Psoas muscle (tissue), 8 donors: ENCODE measurements at regions of chr9 and their contacts with region 1.

Region 1: GRCh38 chr9:4382722-4383317 is 83.0 kb upstream of the GLIS3 start:
- DNase-seq: no peak
- ATAC-seq: peak in 1 of 4 donors; percentile 53
- H3K4me3 ChIP-seq: no peak overlapping the region
- H3K27ac ChIP-seq: no peak overlapping the region
- H3K4me1 ChIP-seq: no peaks in the 10 kb centered on the region
- H3K27me3 ChIP-seq: no peaks in the 10 kb centered on the region
- CTCF ChIP-seq: peak; percentile 57

Region 2: DNA sequence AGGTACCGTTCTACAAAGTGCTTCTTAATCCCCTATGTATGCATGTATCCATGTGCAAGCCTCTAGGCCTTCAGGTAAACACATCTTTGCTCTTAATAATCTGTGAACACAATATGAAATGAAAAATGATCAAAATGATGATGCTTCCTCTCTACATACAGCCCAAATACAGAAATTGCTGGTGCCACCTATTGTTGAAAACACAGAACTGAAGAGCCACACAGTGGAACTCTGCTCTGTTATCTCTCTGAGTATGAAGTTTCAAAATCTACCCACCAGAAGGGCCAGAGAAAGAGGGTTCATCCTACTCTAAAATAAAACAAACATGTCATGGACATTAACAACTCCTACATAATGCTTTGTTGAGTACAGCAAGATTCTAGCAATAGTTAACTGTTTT is 154.2 kb before region 1 on chr9:
- intact Hi-C with region 1: no loop called
- DNase-seq: no peak
- ATAC-seq: peak in 1 of 4 donors; percentile 54
- H3K4me3 ChIP-seq: no peak overlapping the region
- H3K27ac ChIP-seq: no peak overlapping the region
- H3K4me1 ChIP-seq: no peaks in the 10 kb centered on the region
- H3K27me3 ChIP-seq: no peaks in the 10 kb centered on the region
- CTCF ChIP-seq: peak; percentile 43

Region 3: GRCh38 chr9:4324513-4324912 is 58.3 kb before region 1 on chr9:
- intact Hi-C with region 1: no loop called
- DNase-seq: no peak
- ATAC-seq: no peak
- H3K4me3 ChIP-seq: no peak overlapping the region
- H3K27ac ChIP-seq: no peak overlapping the region
- H3K4me1 ChIP-seq: no peaks in the 10 kb centered on the region
- H3K27me3 ChIP-seq: peaks cover 0 to 3% (median 2%) of the 10 kb centered on the region in 3 donors
- CTCF ChIP-seq: no peak

Region 4: DNA sequence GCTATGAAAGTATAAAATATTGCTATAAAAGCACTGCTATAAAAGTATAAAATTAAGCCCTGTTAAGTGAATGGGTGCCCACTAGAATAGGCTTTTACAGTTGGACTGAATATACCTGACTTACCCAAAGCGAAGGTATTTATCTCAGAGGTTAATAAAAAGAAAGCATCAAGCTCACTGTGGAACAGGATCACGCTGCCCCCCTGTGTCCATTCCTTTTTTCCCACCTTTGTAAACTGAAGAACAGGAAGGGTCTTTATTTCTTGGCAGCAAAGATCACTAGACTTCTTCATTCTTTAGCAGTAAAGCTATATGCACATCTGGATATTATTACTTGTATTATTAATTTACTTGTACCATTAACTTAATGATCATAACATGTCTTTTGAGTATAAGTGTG is 257.2 kb after region 1 on chr9:
- intact Hi-C with region 1: loop called (anchors 2 to 5 kb)
- DNase-seq: no peak
- ATAC-seq: peak in 1 of 4 donors; percentile 56
- H3K4me3 ChIP-seq: no peak overlapping the region
- H3K27ac ChIP-seq: no peak overlapping the region
- H3K4me1 ChIP-seq: no peaks in the 10 kb centered on the region
- H3K27me3 ChIP-seq: no peaks in the 10 kb centered on the region
- CTCF ChIP-seq: peak; percentile 62